Activated CD4-positive, alpha-beta memory T cell treated with anti-CD3 and anti-CD28 coated beads for 36 hours (primary cell): ENCODE measurements at regions of chr20 and their contacts with region 1.

Region 1: GRCh38 chr20:30376767-30377666 is 880.4 kb upstream of the DEFB115 start:
- DNase-seq: peak; percentile 93
- H3K4me3 Mint-ChIP-seq: peak overlapping the region; percentile 89
- H3K27ac Mint-ChIP-seq: peak overlapping the region; percentile 92
- H3K4me1 Mint-ChIP-seq: peaks cover 32% of the 10 kb centered on the region
- H3K27me3 Mint-ChIP-seq: no peaks in the 10 kb centered on the region

Region 2: DNA sequence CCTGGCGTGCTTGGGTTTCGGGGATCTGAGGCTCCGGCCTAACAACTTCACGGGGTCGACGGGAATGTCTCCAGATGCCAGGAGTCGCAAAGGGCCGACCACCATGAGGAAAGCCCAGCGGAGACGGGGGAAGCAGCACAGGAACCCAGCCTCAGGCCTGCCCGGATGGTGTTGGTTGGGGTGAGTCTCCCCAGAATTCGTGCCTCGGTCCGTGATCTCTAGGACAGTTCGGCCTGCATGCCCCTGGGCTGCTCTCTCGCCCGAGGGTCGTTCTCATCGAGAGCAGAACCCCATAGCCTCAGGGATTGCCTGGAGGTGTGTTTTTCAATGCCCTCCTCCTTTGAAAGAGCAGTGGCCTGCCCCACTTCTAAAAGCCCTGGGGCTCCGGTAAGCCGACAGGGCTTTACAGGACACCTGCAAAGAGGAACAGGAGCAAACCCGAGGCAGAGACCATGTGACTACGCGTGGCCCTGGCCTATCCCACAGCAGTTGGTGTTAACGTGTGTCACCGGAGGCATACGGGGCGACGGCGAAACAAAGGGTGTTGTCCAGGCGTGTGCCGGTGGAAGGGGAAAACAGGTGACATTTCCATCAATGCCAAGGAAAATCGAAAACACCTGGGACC is 92.6 kb before region 1 on chr20:
- CTCF ChIA-PET with region 1: no interaction called
- POLR2A ChIA-PET with region 1: no interaction called
- intact Hi-C with region 1: loop called (anchors 5 kb)
- DNase-seq: no peak
- H3K4me3 Mint-ChIP-seq: peak overlapping the region; percentile 73
- H3K27ac Mint-ChIP-seq: peak overlapping the region; percentile 28
- H3K4me1 Mint-ChIP-seq: peaks cover 15% of the 10 kb centered on the region
- H3K27me3 Mint-ChIP-seq: no peaks in the 10 kb centered on the region